Calu3 (cell line): ENCODE measurements at regions of chr1 and their contacts with region 1.

Region 1: DNA sequence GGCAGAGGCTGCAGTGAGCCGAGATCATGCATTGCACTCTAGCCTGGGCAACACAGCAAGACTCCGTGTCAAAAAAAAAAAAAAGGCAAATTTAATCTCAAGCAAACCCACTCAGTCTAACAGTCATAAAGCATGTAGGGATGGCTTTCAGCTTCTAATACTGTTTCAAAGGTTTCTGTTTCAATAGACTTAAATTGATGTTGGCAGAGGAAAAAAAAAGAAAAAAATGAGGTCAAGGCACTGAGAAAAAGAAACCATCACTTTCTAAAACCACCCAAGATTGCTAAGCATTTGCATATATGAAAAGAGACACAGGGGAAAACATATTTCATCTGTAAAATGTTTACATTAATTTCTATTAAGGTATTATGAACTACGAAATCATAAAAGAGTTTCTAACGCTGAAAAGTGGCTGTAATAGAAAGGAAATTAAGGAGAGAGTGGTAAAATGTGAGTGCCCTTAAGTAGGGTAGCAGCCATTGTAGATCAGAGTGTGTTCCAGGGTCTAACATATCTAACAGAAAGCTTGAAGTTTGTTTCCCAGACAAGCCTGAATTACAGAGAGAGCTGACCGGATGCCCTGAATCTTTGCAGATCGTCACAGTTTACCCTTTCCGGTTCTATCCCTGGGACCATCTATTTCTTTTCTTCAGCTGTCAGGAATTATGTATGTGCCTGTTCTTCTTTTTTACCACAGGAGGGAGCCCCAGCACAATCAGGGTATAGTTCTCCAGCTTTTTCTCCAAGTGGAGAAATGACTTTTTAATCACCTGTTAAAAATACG is 70.0 kb downstream of the PLD5 start:
- DNase-seq: peak; percentile 32
- H3K4me3 Mint-ChIP-seq: no peak overlapping the region
- H3K27ac Mint-ChIP-seq: no peak overlapping the region
- H3K4me1 Mint-ChIP-seq: no peaks in the 10 kb centered on the region
- H3K27me3 Mint-ChIP-seq: peaks cover 21% of the 10 kb centered on the region
- CTCF ChIP-seq: peak; percentile 65

Region 2: DNA sequence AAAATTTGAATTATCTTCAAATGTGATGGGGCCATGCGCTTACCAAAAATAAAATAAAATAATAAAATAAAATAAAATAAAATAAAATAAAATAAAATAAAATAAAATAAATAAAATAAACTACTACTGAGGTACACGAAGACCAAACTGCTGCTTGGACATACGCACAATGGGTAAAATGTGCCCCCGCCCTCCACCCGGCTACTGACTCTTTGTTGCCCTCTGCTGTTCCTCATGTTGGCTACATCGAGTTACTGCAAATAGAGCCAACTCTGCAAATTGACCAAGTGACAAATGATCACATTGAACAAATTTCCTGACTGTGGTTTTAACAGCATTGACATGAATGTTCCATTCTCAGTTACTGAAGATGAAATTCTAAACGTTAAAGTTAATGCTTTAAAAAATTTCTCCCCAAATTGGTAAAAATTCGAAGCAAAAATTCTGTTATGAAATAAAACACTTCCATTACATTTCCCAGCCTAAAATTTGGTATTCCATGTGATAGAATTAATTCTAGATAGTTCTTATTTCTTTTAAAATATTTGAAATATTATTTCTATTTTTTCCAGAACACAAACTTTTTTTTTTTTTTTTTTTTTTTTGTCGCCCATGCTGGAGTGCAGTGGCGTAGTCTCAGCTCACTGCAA is 436.7 kb before region 1 on chr1:
- CTCF ChIA-PET with region 1: interaction called, 8 read pairs
- intact Hi-C with region 1: loop called (anchors 1 kb)
- DNase-seq: peak; percentile 64
- H3K4me3 Mint-ChIP-seq: no peak overlapping the region
- H3K27ac Mint-ChIP-seq: no peak overlapping the region
- H3K4me1 Mint-ChIP-seq: no peaks in the 10 kb centered on the region
- H3K27me3 Mint-ChIP-seq: no peaks in the 10 kb centered on the region
- CTCF ChIP-seq: peak; percentile 71

Region 3: GRCh38 chr1:242243472-242243871 is 211.0 kb before region 1 on chr1:
- CTCF ChIA-PET with region 1: no interaction called
- intact Hi-C with region 1: no loop called
- DNase-seq: no peak
- H3K4me3 Mint-ChIP-seq: no peak overlapping the region
- H3K27ac Mint-ChIP-seq: no peak overlapping the region
- H3K4me1 Mint-ChIP-seq: peaks cover 11% of the 10 kb centered on the region
- H3K27me3 Mint-ChIP-seq: no peaks in the 10 kb centered on the region
- CTCF ChIP-seq: no peak